Activated T-helper 1 cell treated with anti-CD3 and anti-CD28 coated beads, Interleukin-12 subunit alpha, Interleukin-12 subunit beta, Interleukin-2, Interleukin-4 antibody, amounts not matched to agents 30 ng/mL and 10 ng/mL and 1 ng/mL, durations not matched to agents 14 hours and 24 hours and 36 hours (primary cell): ENCODE measurements at regions of chr21 and their contacts with region 1.

Region 1: GRCh38 chr21:32940079-32941014 is 85.4 kb upstream of the OLIG2 start:
- DNase-seq: no peak
- H3K4me3 Mint-ChIP-seq: no peak overlapping the region
- H3K27ac Mint-ChIP-seq: no peak overlapping the region
- H3K4me1 Mint-ChIP-seq: peaks cover 9% of the 10 kb centered on the region
- H3K27me3 Mint-ChIP-seq: peaks cover 15% of the 10 kb centered on the region

Region 2: DNA sequence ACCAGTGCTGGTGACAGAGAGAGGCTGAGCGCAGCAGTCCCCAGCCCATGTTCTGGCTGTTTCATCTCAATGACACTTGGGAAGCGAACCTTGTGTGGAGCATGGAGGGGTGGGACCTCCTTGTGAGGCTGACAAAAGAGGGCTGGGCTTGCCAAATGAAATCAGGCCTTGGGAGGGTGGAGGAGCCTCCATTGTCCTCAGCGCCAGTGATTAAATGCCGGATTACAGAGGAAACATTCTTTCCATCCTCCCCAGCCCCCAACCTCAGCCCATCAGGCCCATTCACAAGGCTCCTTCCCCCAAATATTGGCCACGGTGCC is 105.5 kb before region 1 on chr21:
- intact Hi-C with region 1: loop called (anchors 10 kb)
- DNase-seq: no peak
- H3K4me3 Mint-ChIP-seq: no peak overlapping the region
- H3K27ac Mint-ChIP-seq: no peak overlapping the region
- H3K4me1 Mint-ChIP-seq: no peaks in the 10 kb centered on the region
- H3K27me3 Mint-ChIP-seq: peaks cover 14% of the 10 kb centered on the region

Region 3: DNA sequence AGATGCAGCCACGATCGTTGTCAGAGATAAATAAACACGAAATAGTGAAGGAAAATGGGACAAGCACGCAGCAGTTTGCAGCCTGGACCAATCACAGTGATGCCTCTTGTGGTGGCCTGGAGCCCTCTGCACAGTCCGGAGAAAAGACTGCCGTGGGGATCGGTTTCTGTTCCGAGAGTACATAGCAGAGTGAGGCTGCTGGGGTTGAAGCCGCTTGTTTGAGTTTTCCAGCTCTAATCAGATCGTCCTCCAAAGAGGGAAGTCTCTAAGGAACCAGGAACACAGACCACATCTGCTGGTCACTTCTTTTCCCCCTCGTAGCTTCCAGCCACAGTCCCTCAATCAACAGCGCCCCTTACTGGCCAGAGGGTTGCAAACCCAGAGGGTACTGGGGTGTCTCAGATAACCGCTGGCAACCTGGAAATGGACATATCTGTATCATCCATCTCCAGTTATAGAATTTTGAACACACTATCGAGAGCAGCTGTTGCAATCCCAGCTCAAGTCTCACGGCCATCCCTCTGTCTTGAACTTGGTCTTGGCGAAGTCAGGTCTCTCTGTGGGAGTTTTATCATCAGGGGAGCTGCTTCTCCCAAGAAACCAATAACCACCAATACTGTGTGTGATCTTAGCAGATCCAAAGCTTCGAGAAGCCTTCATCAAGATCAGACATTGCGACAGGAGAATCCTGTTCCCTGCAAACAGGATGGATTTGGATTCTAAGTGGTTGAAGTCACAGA is 187.0 kb after region 1 on chr21:
- intact Hi-C with region 1: loop called (anchors 1 kb)
- DNase-seq: peak; percentile 8
- H3K4me3 Mint-ChIP-seq: no peak overlapping the region
- H3K27ac Mint-ChIP-seq: no peak overlapping the region
- H3K4me1 Mint-ChIP-seq: peaks cover 8% of the 10 kb centered on the region
- H3K27me3 Mint-ChIP-seq: peaks cover 16% of the 10 kb centered on the region